ENCODE measurements at regions of chr17 and their contacts with region 1.

Region 1: DNA sequence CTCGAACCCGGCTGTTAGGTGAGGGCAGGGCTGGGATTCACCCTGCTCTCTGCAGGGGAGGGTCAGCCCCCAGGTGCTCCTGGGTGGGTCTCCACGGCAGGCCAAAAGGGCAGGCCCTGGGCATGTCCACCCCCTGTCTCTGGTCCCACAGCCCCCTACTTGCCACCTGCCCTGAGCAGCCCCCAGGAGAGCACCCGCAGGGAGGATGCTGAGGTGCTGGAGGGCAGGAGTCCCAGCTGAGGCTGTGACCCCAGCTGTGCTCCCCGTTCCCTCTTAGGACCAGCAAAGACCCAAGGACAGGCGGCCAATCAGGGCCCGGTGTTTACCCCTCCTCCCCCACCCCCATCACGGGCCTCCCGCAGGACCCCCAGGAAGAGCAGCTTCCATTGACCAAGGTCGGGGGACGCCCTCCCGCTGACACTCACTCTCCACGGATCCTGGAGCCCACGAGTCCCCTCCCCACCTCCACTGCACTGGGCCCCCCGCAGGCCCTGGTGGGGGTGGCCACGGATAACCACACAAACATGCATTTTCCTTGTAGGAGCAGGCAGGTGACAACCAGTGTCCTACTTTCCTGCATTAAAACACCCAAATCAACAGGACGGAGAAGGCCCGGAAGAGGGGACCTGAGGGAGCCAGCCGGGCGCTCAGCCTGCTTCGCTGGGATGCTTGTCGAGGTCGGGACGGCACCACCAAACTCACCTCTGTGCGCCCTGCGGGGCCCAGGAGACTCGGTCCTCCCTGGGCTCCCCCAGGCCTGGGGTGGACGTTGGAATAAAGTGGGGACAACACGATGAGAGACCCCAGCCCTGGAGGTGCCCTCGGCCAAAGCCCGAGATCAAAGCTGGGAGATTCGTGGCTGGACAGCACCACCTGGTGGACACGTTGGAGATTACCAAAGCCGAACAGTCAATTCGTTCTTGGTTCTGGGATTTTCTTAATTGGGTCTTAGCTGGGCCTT is 22.5 kb upstream of the ENPP7 start:
- DNase-seq: no peak
- H3K4me3 ChIP-seq: peak overlapping the region; percentile 21
- CTCF ChIP-seq: peak; percentile 74

Region 2: DNA sequence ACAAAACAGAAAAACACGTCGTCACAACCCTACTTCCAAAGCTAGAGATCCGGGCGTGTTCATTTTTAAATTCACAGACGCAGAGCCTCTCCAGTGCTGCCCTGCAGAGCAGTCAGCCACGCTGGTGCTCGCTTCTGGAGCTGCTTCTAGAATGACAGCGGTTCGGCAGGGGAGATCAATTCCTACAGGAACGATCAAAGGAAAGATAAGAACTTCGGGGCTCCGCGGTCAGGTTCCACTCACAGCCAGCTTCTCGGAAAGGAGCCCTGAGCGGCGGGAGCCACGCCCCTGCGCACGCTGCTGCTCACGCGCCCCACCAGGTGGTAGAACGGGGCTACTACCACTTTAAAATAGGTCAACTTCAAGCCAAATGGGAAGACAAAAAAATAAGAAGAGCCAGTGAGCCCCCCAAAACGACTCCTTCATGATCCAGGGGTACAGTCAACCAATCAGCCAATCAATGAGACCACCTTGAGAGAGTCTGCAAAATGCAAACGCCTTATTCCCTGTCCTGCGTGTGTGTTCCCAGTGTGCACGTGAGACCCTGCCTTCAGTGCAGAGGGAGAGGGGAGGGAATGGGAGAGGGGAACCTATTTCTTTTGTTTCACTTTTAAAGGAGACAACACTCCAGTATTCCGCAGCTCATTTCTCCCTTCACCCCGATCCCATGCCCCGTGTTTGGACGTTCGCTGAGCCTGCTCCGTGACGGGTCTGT is 307.1 kb before region 1 on chr17:
- CTCF ChIA-PET with region 1: interaction called, 14 read pairs
- POLR2A ChIA-PET with region 1: no interaction called
- DNase-seq: no peak
- H3K4me3 ChIP-seq: peak overlapping the region; percentile 42
- CTCF ChIP-seq: peak; percentile 90

Region 3: GRCh38 chr17:79484600-79485418 is 223.4 kb before region 1 on chr17:
- CTCF ChIA-PET with region 1: no interaction called
- POLR2A ChIA-PET with region 1: no interaction called
- DNase-seq: no peak
- H3K4me3 ChIP-seq: no peak overlapping the region
- CTCF ChIP-seq: no peak

Region 4: DNA sequence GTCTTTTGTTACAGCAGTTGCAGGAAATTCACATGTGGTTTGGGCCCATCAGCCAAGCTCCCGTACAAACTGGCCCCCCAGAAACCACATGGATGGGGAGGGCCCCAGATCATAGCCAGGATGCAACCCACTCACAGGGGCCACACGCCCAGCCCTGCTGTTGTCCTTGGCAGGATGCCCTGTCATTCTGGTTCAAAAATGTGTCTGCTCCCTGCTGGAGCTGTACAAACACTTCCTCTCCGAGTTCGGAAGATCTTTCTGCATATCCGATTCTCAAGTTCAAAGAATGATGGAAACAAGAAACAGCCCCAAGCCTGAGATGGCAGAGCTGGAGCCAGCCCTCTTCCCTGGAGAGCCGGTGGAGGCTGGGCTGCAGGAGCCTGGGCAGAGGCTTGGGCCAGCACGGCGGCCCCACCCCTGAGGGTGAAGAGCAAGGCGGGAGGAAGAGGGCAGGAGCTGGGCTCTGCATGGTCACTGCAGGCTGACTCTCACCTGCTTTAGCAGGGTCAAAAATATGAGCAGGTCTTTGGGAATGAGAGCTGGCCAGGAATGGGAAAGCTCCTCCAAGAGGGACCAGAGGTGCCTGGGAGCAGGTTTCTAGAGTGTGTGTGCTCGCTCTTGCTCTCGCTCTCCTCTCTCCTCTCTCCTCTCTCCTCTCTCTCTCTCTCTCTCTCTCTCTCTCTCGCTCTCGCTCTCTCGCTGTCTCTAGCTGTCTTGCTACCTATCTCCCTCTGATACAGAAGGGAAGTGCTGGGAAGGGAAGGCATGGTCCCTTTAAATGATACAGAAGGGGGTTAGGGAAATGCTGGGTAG is 12.2 kb before region 1 on chr17:
- CTCF ChIA-PET with region 1: interaction called, 49 read pairs
- POLR2A ChIA-PET with region 1: no interaction called
- DNase-seq: no peak
- H3K4me3 ChIP-seq: no peak overlapping the region
- CTCF ChIP-seq: no peak

Region 5: GRCh38 chr17:79752175-79752574 is 44.0 kb after region 1 on chr17:
- CTCF ChIA-PET with region 1: no interaction called
- POLR2A ChIA-PET with region 1: no interaction called
- DNase-seq: no peak
- H3K4me3 ChIP-seq: no peak overlapping the region
- CTCF ChIP-seq: no peak